Tibial artery (tissue), 4 donors: ENCODE measurements at regions of chr3 and their contacts with region 1.

Region 1: DNA sequence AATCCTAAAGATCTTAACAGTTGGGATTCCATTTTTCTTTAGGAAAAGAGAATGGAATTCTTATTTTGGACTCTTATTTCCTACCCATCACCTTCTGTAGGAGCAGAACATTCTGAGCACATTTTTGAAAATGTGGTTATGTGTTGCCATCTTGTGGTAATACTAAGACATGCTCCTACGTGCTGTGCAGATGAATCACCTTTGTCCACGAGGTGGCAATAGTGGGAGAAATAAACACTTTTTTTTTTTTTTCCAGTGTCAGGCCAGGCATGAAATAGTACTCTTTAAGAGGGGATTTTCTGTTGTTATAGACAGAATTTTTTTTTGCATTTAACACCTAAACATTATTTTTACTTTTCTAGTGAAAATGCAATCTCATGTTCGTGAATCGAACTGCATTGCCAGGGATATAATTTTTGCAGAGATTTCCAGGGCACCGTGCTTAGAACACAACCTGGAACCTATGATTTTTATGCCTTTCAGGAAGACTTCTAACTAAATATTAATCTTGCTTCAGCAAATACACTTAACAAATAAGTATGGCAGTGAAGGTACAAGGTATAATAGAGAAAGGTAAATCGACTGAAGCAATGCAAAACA is 196.6 kb downstream of the GAP43 start:
- DNase-seq: peak; percentile 61 to 74
- H3K4me3 ChIP-seq: no peak overlapping the region
- H3K27ac ChIP-seq: no peak overlapping the region
- H3K4me1 ChIP-seq: no peaks in the 10 kb centered on the region
- H3K27me3 ChIP-seq: no peaks in the 10 kb centered on the region
- CTCF ChIP-seq: peak; percentile 93 to 95

Region 2: DNA sequence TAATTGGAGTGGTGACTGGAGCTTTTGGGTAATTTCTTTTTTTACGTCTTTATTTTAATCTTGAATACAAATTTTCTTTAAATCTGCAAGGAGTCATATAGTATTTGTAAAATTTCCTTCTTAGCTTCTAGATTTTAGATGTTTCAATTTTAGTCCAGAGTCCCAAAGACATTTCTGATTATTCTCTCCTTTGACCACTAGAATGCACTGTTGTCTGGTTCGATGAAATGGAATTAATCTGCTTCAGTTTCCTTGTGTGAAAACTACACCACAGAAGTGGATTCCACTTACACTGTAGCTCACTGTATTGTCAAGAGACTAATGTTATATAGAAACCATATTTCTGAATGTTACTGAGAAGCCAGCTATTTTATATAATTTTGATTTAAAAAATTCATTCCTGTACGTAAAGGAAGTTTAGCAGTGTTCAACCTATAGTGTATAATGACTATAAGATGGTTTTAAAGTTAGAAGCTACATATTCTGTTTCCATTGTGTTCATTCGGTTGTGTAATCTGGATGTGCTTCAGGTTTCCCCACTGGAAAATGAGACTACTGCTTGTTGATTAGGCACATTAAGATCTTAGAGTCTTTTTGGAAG is 1975.2 kb before region 1 on chr3:
- intact Hi-C with region 1: loop called (anchors 10 kb)
- DNase-seq: no peak
- H3K4me3 ChIP-seq: no peak overlapping the region
- H3K27ac ChIP-seq: no peak overlapping the region
- H3K4me1 ChIP-seq: no peaks in the 10 kb centered on the region
- H3K27me3 ChIP-seq: no peaks in the 10 kb centered on the region
- CTCF ChIP-seq: peak; percentile 42 to 44

Region 3: DNA sequence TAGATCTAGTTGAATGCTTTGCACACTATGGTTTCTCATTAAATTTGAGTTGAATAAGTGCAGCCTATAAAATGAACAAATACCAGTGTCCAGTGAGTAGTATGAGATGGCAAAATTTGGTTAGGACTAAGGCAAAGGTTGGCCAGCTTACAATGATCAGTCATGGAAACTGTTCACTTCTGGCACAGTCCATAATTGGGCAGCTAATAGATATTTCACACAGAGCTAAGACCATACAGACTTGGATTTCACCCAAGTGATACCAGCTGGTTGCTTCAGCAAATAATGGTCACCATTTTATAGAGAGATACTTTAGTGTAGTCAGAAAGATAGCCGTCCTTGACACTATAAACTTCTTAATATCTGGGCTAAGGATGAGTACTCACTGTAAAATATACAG is 180.9 kb before region 1 on chr3:
- intact Hi-C with region 1: no loop called
- DNase-seq: no peak
- H3K4me3 ChIP-seq: no peak overlapping the region
- H3K27ac ChIP-seq: no peak overlapping the region
- H3K4me1 ChIP-seq: no peaks in the 10 kb centered on the region
- H3K27me3 ChIP-seq: no peaks in the 10 kb centered on the region
- CTCF ChIP-seq: no peak

Region 4: DNA sequence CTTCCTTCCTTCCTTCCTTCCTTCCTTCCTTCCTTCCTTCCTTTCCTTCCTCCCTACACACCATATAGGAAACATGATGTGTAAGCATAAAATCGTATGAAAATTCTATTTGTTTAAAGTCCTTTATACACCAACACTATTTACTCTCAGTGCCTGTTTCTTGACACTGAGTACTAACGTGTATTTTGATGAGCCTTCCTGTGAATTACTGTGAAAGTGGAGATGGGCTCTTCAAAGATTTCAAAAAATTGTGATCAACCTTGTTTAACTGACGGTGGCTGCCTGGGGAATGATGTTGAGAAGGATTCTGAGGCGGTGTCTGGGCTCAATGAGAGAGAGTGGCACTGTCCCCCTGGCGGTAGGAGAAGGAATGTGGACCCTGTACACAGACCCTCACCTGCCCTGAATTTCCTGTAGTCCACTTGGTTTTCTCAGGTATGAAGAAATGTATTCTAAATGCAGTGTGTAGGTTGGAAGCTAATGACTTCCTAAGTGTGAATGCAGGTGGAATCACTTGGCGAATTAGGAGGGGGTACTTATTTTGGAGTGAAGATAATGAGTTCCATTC is 41.4 kb after region 1 on chr3:
- intact Hi-C with region 1: no loop called
- DNase-seq: no peak
- H3K4me3 ChIP-seq: no peak overlapping the region
- H3K27ac ChIP-seq: no peak overlapping the region
- H3K4me1 ChIP-seq: no peaks in the 10 kb centered on the region
- H3K27me3 ChIP-seq: no peaks in the 10 kb centered on the region
- CTCF ChIP-seq: no peak

Region 5: GRCh38 chr3:115899001-115899400 is 79.1 kb after region 1 on chr3:
- intact Hi-C with region 1: no loop called
- DNase-seq: no peak
- H3K4me3 ChIP-seq: no peak overlapping the region
- H3K27ac ChIP-seq: no peak overlapping the region
- H3K4me1 ChIP-seq: no peaks in the 10 kb centered on the region
- H3K27me3 ChIP-seq: peaks cover 0 to 4% of the 10 kb centered on the region in 2 donors
- CTCF ChIP-seq: no peak